Mucosa of descending colon (tissue), 3 donors: ENCODE measurements at regions of chrX and their contacts with region 1.

Region 1: GRCh38 chrX:68196939-68197791 is 236.1 kb downstream of the OPHN1 start:
- DNase-seq: peak in 1 of 3 donors; percentile 48
- ATAC-seq: peak; percentile 92
- H3K4me3 ChIP-seq: no peak overlapping the region
- H3K4me1 ChIP-seq: no peaks in the 10 kb centered on the region
- CTCF ChIP-seq: no peak

Region 2: GRCh38 chrX:68433155-68433980 is 236.2 kb after region 1 on chrX and contains the start of gene OPHN1:
- intact Hi-C with region 1: no loop called
- DNase-seq: peak; percentile 80 to 87 (median 87)
- ATAC-seq: peak; percentile 95
- H3K4me3 ChIP-seq: peak within 1 kb of the TSS; percentile 17
- H3K4me1 ChIP-seq: no peaks in the 10 kb centered on the region
- CTCF ChIP-seq: no peak
- total RNA-seq, gene OPHN1: 7.5 to 9.5 (median 7.6) TPM

Region 3: DNA sequence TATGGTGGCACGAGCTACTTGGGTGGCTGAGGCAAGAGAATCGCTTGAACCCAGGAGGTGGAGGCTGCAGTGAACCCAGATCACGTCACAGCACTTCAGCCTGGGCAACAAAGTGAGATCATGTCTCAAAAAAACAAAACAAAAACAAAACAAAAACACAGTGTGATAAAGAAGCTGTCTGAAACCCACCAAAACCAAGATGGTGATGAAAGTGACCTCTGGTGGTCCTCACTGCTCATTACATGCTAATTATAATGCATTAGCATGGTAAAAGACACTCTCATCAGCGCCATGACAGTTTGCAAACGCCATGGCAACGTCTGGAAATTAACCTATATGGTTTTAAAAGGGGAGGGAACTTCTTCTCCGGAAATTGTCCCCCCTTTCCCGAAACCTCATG is 265.5 kb after region 1 on chrX:
- intact Hi-C with region 1: loop called in 1 of 2 experiments (anchors 10 kb)
- DNase-seq: peak in 1 of 3 donors; percentile 26
- ATAC-seq: no peak
- H3K4me3 ChIP-seq: no peak overlapping the region
- H3K4me1 ChIP-seq: no peaks in the 10 kb centered on the region
- CTCF ChIP-seq: no peak